GM13977 (cell line): ENCODE measurements at regions of chr7 and their contacts with region 1.

Region 1: GRCh38 chr7:120725376-120726039 is 132.4 kb downstream of the TSPAN12 start:
- DNase-seq: peak; percentile 14
- CTCF ChIP-seq: peak; percentile 56

Region 2: GRCh38 chr7:120280743-120281142 is 444.8 kb before region 1 on chr7:
- in situ Hi-C with region 1: loop called (anchors 25 kb)
- DNase-seq: no peak
- CTCF ChIP-seq: no peak